Activated naive CD8-positive, alpha-beta T cell treated with anti-CD3 and anti-CD28 coated beads, Interleukin-2, amount 10 ng/mL, durations not matched to agents 7 days and 5 days (primary cell): ENCODE measurements at regions of chr16 and their contacts with region 1.

Region 1: GRCh38 chr16:3027945-3028712 is 4.3 kb downstream of the THOC6 start:
- DNase-seq: peak; percentile 93
- ATAC-seq: peak; percentile 28
- H3K4me3 Mint-ChIP-seq: peak overlapping the region; percentile 81
- H3K27ac Mint-ChIP-seq: peak overlapping the region; percentile 61
- H3K4me1 Mint-ChIP-seq: peaks cover 27% of the 10 kb centered on the region
- H3K27me3 Mint-ChIP-seq: peaks cover 16% of the 10 kb centered on the region

Region 2: DNA sequence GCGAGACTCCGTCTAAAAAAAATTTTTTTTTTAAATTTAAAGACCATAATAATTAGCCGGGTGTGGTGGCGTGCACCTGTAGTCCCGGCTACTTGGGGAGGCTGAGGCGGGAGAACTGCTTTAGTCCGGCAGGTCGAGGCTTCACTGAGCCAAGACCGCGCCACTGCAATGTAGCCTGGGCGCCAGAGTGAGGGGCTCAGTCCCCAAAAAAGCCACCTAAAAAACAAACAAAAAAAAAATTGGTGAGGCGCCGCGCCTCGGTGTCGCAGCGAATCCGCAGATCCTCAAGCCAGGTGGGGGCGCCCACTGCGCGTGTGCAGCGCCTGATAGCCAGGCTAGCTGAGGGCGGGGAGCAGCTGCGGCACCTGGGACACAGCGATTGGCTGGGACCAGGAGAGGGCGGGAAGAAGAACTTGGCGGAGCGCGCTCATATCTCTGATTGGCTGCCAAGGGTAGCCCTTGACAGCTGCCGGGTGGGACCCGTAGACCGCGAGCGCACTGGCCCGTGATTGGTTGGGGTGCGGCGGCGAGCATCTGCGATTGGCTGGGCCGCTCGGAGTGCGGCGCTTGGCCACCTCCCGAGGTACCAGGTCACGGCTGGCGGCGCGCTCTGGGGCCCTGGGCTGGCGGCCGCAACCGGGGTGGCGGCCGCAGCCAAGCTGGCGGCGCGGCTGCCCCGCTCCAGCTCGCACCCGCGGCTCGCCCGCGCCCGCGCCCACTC is 24.4 kb before region 1 on chr16:
- POLR2A ChIA-PET with region 1: interaction called, 12 read pairs
- DNase-seq: peak; percentile 93
- ATAC-seq: peak; percentile 99
- H3K4me3 Mint-ChIP-seq: peak overlapping the region; percentile 64
- H3K27ac Mint-ChIP-seq: no peak overlapping the region
- H3K4me1 Mint-ChIP-seq: peaks cover 19% of the 10 kb centered on the region
- H3K27me3 Mint-ChIP-seq: peaks cover 32% of the 10 kb centered on the region

Region 3: DNA sequence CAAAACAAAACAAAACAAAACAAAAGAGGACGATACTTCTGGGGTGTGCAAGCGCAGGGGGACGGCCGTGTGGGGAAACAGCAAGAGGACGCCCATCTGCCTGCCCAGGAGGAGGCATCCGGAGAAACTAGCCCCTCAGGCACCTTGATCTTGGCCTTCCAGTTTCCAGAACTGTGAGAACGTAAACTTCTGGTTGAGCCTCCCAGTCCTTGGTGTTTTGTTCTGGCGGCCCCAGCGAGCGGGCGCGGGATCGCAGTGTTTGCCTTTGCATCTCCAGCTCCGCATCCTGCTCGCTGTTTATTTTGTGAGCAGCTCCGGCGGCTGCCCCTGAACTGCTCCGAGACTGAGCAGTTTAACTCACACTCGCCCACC is 17.2 kb after region 1 on chr16:
- POLR2A ChIA-PET with region 1: interaction called, 105 read pairs
- DNase-seq: no peak
- ATAC-seq: peak; percentile 45
- H3K4me3 Mint-ChIP-seq: peak overlapping the region; percentile 77
- H3K27ac Mint-ChIP-seq: peak overlapping the region; percentile 83
- H3K4me1 Mint-ChIP-seq: peaks cover 23% of the 10 kb centered on the region
- H3K27me3 Mint-ChIP-seq: peaks cover 35% of the 10 kb centered on the region